Prostate gland (tissue), 2 donors: ENCODE measurements at regions of chr16 and their contacts with region 1.

Region 1: DNA sequence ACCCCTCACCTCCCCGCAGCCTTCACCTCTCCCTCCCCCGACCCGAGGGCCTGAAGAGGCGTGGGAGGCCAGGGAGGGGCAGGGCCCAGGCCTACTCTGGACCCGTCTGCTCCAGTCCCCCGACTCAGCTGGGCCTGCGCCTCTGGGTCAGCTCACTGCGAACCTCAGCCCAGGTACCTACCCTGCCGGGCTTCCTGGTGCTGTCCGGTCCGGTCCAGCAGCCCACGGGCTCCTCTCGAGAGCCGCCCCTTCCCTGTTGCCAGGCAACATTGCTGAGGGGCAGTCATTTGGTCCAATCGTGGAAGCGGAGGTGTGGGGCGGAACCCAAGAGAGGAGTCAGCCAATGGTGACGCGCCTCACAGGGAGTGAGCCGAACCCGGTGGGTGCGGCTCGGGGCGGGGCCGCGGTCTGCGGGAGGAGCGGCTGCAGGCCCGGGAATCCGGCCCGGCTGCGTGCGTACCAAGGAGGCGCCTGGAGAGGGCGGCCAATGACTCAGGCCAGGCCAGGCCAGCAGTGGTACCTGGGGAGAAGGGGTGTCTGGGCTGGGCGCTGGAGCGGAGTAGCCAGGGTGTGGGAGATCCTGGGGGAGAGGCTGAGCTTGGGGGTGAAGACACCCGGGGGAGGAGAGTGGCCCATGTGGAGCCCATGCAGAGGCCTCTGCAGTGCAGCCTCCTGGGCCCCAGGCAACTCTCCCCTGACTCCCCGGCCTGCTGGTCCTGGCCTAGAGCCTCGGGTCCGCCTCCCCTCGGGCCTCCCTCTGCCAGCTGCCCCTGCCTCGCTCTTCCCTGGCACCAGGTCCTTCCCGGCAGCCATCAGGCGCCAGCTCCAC is at the start of gene MEAK7:
- DNase-seq: peak; percentile 99
- H3K4me3 ChIP-seq: peak within 1 kb of the TSS; percentile 83 to 89
- H3K27ac ChIP-seq: peak within 1 kb of the TSS; percentile 83 to 87
- H3K4me1 ChIP-seq: peaks cover 8% of the 10 kb centered on the region
- H3K27me3 ChIP-seq: no peaks in the 10 kb centered on the region
- CTCF ChIP-seq: peak in 1 of 4 experiments; percentile 33
- POLR2A ChIP-seq: peak; percentile 70
- total RNA-seq, gene MEAK7: 12.4 to 13.7 TPM

Region 2: DNA sequence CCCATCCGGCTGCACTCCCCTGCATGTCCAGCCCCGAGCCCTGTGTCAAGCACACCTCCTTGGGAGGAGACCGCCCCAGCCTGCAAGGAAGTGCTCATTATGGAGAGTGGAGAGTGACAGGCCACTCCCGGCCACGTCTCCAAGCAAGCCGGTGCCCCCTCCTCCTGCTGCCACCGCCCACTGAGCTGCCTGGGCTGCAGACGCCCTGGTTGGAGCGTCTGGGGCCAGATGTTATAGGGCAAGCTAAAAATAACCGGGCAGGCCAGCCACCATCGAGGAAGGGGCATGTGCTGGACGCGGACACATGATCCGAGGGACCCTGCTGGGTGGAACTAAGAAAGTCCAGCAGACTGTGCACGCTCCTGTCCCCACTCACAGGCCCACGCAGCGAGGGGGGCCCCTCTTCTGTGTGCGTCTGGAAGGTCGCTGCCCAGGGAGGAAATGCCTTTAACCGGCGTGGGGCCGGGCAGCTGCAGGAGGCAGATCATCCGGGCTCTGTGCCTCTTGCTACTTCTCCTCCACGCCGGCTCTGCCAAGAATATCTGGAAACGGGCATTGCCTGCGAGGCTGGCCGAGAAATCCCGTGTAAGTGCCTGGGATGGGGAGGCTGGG is 210.0 kb before region 1 on chr16 and contains the start of gene WFDC1:
- intact Hi-C with region 1: loop called (anchors 5 kb)
- DNase-seq: no peak
- H3K4me3 ChIP-seq: peak within 1 kb of the TSS in 1 of 2 donors; percentile 25
- H3K27ac ChIP-seq: peak within 1 kb of the TSS; percentile 57 to 72
- H3K4me1 ChIP-seq: no peaks in the 10 kb centered on the region
- H3K27me3 ChIP-seq: no peaks in the 10 kb centered on the region
- CTCF ChIP-seq: no peak
- POLR2A ChIP-seq: no peak
- total RNA-seq, gene WFDC1: 60.9 to 80.8 TPM

Region 3: DNA sequence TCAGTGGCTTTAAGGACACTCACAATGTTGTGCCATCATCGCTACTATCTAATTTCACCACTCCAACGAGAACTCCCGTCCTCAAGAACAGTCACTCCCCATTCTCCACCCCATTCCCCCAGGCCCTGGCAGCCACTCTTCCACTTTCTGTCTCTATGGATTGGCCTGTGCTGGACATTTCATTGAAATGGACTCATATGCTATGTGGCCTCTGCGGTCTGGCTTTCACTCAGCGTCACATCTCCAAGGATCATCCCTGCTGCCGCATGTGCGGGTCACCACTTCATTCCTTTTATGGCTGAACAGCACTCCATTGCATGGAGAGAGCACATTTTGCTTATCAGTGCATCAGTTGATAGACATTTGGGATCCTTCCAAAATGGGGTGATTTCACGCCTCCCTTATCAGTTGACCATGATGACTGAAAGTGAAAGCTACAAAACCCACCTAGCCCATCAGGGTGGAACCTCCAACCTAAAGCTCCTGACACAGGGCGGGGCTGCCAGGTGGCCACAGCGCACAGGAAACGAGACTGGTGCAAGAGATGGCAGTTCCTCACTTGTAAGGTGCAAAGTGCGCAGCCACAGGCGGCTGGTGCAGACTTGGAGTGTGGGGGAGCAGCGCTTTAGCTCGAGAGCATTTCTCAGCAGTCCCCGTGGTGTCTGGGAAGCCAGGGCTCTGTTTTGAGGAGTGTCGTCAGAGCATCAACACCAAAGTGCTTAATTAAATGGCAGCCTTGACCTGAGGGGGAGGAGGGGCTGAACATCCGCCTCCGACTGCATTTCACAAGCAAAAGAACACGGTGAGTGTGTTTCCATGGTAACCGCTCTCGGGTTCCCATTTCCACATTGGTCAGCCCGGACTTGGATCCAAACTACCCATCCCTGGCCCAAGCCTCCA is 89.4 kb after region 1 on chr16:
- intact Hi-C with region 1: no loop called
- DNase-seq: no peak
- H3K4me3 ChIP-seq: no peak overlapping the region
- H3K27ac ChIP-seq: no peak overlapping the region
- H3K4me1 ChIP-seq: no peaks in the 10 kb centered on the region
- H3K27me3 ChIP-seq: no peaks in the 10 kb centered on the region
- CTCF ChIP-seq: no peak
- POLR2A ChIP-seq: no peak